Mucosa of descending colon (tissue), 3 donors: ENCODE measurements at regions of chr14 and their contacts with region 1.

Region 1: DNA sequence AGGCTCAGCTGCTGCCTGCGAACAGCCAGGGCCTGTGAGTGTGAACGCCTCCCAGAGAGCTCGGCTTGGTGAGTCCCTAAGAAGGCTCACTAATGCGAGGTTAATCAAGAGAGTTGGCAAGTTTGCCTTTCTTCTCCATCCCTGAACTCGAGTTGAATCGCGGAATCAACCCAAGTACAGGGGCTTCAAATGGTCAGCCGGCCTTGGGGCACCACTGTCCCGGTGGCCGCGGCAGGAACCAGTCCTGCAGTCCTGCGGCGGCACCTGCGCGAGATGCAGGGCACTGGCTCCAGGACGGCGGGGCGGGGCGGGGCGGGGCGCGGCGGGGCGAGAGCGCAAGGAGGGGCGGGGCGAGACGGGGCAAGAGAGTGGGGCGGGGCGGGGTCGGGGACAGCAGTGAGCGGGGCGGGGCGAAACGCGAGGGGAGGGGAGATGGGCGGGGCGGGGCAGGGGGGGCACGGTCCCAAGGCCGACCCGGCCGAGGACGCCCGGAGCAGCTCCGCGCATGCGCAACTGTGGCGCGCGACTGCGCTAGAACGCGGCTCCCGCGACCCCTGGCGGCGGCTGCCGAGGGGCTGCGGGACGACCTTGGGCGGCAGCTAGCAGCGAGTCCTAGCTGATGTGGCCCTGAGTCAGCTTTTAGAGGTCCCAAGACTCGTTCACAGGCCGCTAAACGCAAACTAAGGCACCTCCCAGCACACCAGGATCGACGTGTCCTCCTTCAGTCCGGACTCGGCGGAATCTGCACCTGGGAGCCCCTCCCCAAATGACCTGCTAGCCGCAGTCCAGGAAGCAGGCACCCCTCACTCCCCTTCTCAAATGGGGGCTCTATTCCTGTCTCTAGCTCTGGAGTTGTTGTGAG is 58.0 kb downstream of the TTC7B start:
- DNase-seq: peak; percentile 90 to 96 (median 94)
- ATAC-seq: peak; percentile 94
- H3K4me3 ChIP-seq: peak overlapping the region; percentile 4
- H3K4me1 ChIP-seq: peaks cover 6% of the 10 kb centered on the region
- CTCF ChIP-seq: peak; percentile 89

Region 2: GRCh38 chr14:90383075-90383730 is 375.1 kb before region 1 on chr14:
- intact Hi-C with region 1: loop called in 1 of 2 experiments (anchors 5 kb)
- DNase-seq: peak; percentile 99 to 100 (median 99)
- ATAC-seq: peak; percentile 90
- H3K4me3 ChIP-seq: peak overlapping the region; percentile 53
- H3K4me1 ChIP-seq: peaks cover 18% of the 10 kb centered on the region
- CTCF ChIP-seq: peak; percentile 33

Region 3: GRCh38 chr14:90827916-90828610 is 69.8 kb after region 1 on chr14:
- intact Hi-C with region 1: no loop called
- DNase-seq: peak; percentile 94 to 96 (median 94)
- ATAC-seq: peak; percentile 99
- H3K4me3 ChIP-seq: no peak overlapping the region
- H3K4me1 ChIP-seq: peaks cover 13% of the 10 kb centered on the region
- CTCF ChIP-seq: no peak